HCT116 (cell line): ENCODE measurements at regions of chr7 and their contacts with region 1.

Region 1: GRCh38 chr7:7761340-7761980 is 43.1 kb upstream of the RPA3 start:
- DNase-seq: peak; percentile 26
- ATAC-seq: peak; percentile 60; the same call in 1 of the 2 replicates
- H3K4me3 ChIP-seq: no peak overlapping the region
- H3K27ac ChIP-seq: no peak overlapping the region
- H3K4me1 ChIP-seq: no peaks in the 10 kb centered on the region
- H3K27me3 ChIP-seq: no peaks in the 10 kb centered on the region
- CTCF ChIP-seq: peak; percentile 19 to 47 (median 40); a peak in 4 of 6 replicates
- POLR2A ChIP-seq: no peak
- RAD21 ChIP-seq: peak; percentile 62

Region 2: GRCh38 chr7:7424151-7424873 is 337.1 kb before region 1 on chr7:
- CTCF ChIA-PET with region 1: interaction called, 3 read pairs
- POLR2A ChIA-PET with region 1: no interaction called
- RAD21 ChIA-PET with region 1: no interaction called
- intact Hi-C with region 1: loop called (anchors 10 kb)
- DNase-seq: peak; percentile 66
- ATAC-seq: peak; percentile 96
- H3K4me3 ChIP-seq: peak overlapping the region; percentile 23 to 42
- H3K27ac ChIP-seq: no peak overlapping the region
- H3K4me1 ChIP-seq: peaks cover 0 to 3% of the 10 kb centered on the region in 2 experiments; a peak in 2 of 4 replicates
- H3K27me3 ChIP-seq: no peaks in the 10 kb centered on the region
- CTCF ChIP-seq: peak; percentile 85 to 91 (median 89)
- POLR2A ChIP-seq: no peak
- RAD21 ChIP-seq: peak; percentile 99

Region 3: GRCh38 chr7:7577888-7578287 is 183.6 kb before region 1 on chr7:
- CTCF ChIA-PET with region 1: no interaction called
- POLR2A ChIA-PET with region 1: no interaction called
- RAD21 ChIA-PET with region 1: no interaction called
- intact Hi-C with region 1: no loop called
- DNase-seq: no peak
- ATAC-seq: no peak
- H3K4me3 ChIP-seq: no peak overlapping the region
- H3K27ac ChIP-seq: no peak overlapping the region
- H3K4me1 ChIP-seq: no peaks in the 10 kb centered on the region
- H3K27me3 ChIP-seq: no peaks in the 10 kb centered on the region
- CTCF ChIP-seq: no peak
- POLR2A ChIP-seq: no peak
- RAD21 ChIP-seq: no peak

Region 4: DNA sequence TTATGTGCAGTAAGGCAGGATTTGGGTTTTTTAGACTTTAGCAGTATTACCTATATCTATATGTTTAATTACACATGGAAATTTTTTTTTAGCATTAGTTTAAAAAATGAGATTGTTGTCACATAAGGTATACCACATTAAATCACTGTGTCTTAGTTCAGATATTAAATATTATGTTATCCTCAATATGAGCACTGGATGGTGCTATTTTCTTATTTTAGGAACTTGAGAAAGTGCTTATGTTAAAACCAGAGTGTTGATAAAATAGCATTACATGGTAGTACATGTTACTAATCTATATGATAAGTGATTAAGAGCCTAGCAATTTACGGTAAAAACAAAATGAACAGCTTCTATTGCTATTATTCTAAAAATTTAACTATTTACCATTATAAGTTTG is 166.0 kb before region 1 on chr7:
- CTCF ChIA-PET with region 1: no interaction called
- POLR2A ChIA-PET with region 1: no interaction called
- RAD21 ChIA-PET with region 1: no interaction called
- intact Hi-C with region 1: loop called (anchors 1 kb)
- DNase-seq: peak; percentile 8
- ATAC-seq: no peak
- H3K4me3 ChIP-seq: no peak overlapping the region
- H3K27ac ChIP-seq: no peak overlapping the region
- H3K4me1 ChIP-seq: no peaks in the 10 kb centered on the region
- H3K27me3 ChIP-seq: no peaks in the 10 kb centered on the region
- CTCF ChIP-seq: peak in 2 of 3 experiments; percentile 38 to 53; a peak in 3 of 6 replicates
- POLR2A ChIP-seq: no peak
- RAD21 ChIP-seq: peak; percentile 65

Region 5: GRCh38 chr7:7681179-7681935 is 80.1 kb before region 1 on chr7:
- CTCF ChIA-PET with region 1: interaction called, 11 read pairs
- POLR2A ChIA-PET with region 1: no interaction called
- RAD21 ChIA-PET with region 1: no interaction called
- intact Hi-C with region 1: loop called (anchors 2 kb)
- DNase-seq: peak; percentile 44
- ATAC-seq: peak; percentile 84
- H3K4me3 ChIP-seq: no peak overlapping the region
- H3K27ac ChIP-seq: no peak overlapping the region
- H3K4me1 ChIP-seq: 0 out of 4 replicates have a peak, but pooled peaks cover 0 to 4% of the 10 kb centered on the region in 2 experiments
- H3K27me3 ChIP-seq: no peaks in the 10 kb centered on the region
- CTCF ChIP-seq: peak; percentile 41 to 75 (median 66); a peak in 5 of 6 replicates
- POLR2A ChIP-seq: no peak
- RAD21 ChIP-seq: peak; percentile 80